Left cardiac atrium (tissue), 4 donors: ENCODE measurements at regions of chr6 and their contacts with region 1.

Region 1: DNA sequence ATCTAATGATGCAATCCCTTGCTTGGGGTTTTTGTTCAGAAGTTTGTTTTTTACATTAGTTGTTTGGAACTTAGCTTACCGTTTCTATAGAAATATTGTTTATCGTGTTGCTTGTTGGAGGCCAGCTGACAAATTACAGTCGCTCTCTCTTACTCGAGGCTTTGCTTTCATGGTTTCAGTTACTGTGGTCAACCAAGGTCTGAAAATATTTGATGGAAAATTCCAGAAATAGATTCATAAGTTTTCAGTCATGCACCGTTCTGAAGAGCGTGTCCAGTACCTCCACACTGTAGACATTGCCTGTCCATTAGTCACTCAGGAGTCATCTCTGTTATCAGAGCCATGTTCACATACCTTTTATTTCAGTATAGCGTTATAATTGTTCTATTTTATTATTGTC is 47.9 kb downstream of the DEK start:
- DNase-seq: no peak
- ATAC-seq: no peak

Region 2: DNA sequence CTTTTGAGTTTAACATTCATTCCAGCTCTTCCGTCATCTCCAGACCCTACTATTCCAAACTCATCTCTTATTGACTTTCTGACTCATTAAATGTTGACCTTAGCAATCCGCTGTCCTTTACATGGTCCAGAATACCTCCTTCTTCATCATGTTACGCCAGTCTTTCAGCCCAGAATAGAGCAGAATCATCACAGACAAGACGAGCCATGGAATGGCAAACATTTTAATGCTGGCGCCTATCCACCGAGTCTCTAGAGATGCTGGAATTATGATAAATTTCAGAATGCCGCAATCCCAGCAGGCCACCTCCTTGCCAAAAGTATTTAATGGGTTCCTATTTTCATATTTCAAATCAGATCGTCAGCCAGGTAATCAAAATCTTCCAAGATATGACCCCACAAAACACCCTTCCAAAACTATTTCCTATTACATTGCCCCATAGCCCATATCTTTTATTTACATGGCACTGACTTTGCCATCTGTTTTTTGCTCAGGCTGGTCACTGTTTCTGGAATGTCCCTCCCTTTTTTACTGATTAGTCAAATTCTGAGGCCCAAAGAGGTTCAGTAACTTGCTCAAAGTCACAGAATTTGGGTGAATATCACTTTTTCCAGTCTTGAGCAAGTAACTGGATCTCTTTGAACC is 134.9 kb before region 1 on chr6:
- intact Hi-C with region 1: no loop called
- DNase-seq: no peak
- ATAC-seq: no peak

Region 3: DNA sequence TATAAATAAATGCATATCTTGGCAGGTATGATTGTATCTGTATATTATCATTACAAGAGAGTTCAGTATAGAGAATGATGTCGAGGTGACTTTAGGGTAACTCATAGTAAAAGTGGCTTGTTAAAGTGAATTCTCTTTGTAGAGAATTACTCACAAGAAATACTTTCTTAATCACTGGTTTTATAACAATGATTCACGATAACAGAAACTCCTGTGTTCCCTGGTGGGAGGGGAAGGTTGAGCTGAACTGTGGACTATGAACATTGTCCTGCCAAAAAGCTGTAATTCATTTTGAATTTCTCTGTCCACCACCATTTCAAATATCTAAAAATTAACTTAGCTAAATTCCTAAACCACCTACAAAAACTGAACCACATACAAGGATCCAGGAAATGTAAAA is 69.3 kb before region 1 on chr6:
- intact Hi-C with region 1: no loop called
- DNase-seq: no peak
- ATAC-seq: no peak

Region 4: DNA sequence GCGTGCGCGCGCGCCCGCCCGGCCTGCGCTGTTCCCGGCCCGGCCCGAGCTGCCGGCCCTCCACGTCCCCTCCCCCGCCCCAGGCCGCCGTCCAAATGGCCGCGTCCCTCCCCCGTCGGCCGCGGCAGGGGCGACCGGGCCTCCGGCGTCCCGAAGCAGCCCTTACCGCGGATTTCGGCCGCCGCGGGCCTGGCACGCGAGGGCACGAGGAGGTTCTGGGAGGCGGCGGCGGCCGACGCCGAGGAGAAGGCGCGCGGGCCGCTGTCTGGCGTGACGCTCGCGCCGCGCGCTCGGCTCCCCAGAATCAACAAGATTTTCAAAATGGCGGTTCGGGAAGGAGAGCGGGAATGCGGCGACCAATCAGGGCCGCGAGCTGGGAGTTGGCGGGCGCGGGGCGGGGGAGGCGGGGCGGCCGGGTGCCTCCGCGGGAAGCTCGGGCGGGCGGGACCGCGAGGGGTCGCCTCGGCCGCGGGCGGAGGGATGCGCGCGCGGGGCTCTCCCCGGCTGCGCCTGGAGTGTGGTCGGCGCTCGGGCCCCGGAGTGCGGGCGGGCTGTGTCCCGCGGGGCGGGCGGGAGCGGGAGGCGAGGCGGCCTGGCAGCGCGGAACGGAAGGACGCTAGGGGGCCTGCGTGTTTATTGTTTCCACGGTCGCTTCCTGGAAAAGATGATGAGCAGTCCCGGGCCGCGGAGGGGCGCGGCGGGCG is 48.0 kb after region 1 on chr6 and contains the start of gene DEK:
- intact Hi-C with region 1: loop called in 1 of 2 experiments (anchors 5 kb)
- DNase-seq: peak; percentile 88
- ATAC-seq: peak; percentile 89 to 91
- total RNA-seq, gene DEK: 72.9 to 87.2 TPM

Region 5: GRCh38 chr6:18350712-18351111 is 134.3 kb after region 1 on chr6:
- intact Hi-C with region 1: no loop called
- DNase-seq: no peak
- ATAC-seq: no peak